CD8-positive, alpha-beta T cell (primary cell): ENCODE measurements at regions of chr1 and their contacts with region 1.

Region 1: DNA sequence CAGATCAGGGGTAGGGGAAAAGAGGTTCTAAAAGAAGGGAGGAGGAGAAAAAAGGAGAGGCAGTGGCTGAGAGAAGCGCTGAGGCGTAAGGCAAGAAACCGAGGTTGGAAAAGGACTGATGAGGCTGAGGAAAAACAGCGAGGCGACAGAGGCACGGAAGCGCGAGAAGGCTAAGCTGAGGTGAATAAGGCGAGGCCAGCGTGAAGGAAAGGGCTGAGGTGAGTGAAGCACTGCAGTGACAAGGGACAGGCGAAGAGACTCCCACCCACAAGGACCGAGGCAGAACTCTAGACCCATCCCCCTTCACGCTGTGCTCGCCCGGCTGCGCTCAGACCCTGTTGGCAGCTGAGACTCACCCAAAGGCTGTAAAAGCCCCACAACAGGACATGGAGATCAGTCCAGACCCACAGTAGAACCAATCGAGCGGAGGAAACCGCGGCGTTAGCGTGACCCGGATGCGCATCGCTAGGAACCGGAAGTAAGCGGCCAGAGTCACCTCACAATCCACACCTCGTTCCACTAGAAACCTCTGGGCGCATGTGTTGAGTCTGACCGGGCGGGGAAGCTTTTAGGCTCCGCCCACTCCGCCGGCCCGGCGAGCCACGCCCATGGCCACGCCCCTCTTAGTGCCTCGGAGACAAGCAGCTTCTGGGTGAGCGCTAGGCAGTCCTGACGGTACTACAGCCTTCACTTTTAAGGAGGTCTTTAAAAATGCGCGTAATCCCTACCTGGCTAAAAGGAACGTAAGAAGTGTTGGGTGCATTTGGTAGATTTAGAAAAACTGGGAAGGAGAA is at the start of gene EYA3:
- DNase-seq: peak; percentile 97 to 100 (median 99)
- ATAC-seq: peak; percentile 95
- H3K4me3 ChIP-seq: peak within 1 kb of the TSS; percentile 72 to 84
- H3K4me3 Mint-ChIP-seq: peak within 1 kb of the TSS; percentile 85
- H3K27ac ChIP-seq: peak within 1 kb of the TSS; percentile 58 to 89
- H3K27ac Mint-ChIP-seq: peak within 1 kb of the TSS; percentile 97
- H3K4me1 ChIP-seq: peaks cover 25% of the 10 kb centered on the region
- H3K4me1 Mint-ChIP-seq: peaks cover 45% of the 10 kb centered on the region
- H3K27me3 ChIP-seq: no peaks in the 10 kb centered on the region
- H3K27me3 Mint-ChIP-seq: peaks cover 3% of the 10 kb centered on the region
- CTCF ChIP-seq: no peak
- total RNA-seq, gene EYA3: 4.9 to 5.2 TPM

Region 2: GRCh38 chr1:27772933-27773825 is 315.2 kb before region 1 on chr1 and contains the start of gene STX12:
- CTCF ChIA-PET with region 1: no interaction called
- POLR2A ChIA-PET with region 1: no interaction called
- intact Hi-C with region 1: loop called in 1 of 2 experiments (anchors 2 kb)
- DNase-seq: peak; percentile 96 to 100 (median 98)
- ATAC-seq: peak; percentile 91
- H3K4me3 ChIP-seq: peak within 1 kb of the TSS; percentile 94 to 98
- H3K4me3 Mint-ChIP-seq: peak within 1 kb of the TSS; percentile 91
- H3K27ac ChIP-seq: peak within 1 kb of the TSS; percentile 76 to 94
- H3K27ac Mint-ChIP-seq: peak within 1 kb of the TSS; percentile 98
- H3K4me1 ChIP-seq: peaks cover 16% of the 10 kb centered on the region
- H3K4me1 Mint-ChIP-seq: peaks cover 37% of the 10 kb centered on the region
- H3K27me3 ChIP-seq: no peaks in the 10 kb centered on the region
- H3K27me3 Mint-ChIP-seq: no peaks in the 10 kb centered on the region
- CTCF ChIP-seq: no peak
- total RNA-seq, gene STX12: 21.0 to 26.0 TPM

Region 3: DNA sequence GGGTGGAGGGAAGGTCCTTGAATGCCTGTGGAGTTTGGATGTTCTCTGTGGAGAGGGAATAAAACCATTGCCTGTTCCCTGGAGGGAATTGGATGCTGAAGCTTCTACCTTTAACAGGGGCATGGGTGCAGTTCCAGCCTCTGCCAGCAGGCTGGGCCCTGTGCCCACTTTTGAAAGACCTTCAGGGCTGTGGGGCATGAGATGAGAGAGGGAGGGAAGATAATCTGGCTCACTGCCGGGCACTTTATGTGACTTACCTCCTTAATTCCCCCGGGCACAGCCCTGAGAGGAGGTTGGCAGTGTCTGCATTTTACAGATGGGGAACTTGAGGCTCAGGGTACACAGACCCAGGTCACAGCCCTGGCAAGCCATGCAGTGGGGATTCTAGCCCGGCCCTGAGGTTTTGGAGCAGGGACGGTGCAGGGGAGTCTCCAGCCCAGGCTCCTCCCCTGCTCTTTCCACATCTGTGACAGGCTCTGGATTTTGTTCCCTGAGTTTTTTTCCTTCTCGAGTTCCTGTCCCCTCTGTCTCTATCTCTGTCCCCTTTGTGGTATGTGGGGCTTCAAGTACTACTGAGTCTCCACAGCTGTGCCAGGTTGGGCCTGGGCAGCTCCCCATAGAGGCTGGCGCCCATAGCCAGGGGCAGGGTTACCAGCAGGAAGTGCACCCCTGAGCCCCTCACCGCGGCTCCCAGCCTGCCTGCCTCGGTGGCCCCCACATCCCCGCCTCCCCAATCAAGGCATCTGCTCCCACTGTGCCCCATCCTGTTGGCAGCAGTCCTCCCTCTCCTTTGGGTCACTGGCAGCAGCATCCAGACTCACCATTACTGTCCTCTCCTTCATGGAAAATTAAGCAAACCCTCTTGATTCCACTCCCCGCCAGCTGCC is 230.1 kb before region 1 on chr1:
- CTCF ChIA-PET with region 1: no interaction called
- POLR2A ChIA-PET with region 1: no interaction called
- intact Hi-C with region 1: loop called in 1 of 2 experiments (anchors 5 kb)
- DNase-seq: peak; percentile 71 to 91 (median 85)
- ATAC-seq: peak; percentile 100
- H3K4me3 ChIP-seq: no peak overlapping the region
- H3K4me3 Mint-ChIP-seq: no peak overlapping the region
- H3K27ac ChIP-seq: no peak overlapping the region
- H3K27ac Mint-ChIP-seq: no peak overlapping the region
- H3K4me1 ChIP-seq: peaks cover 11% of the 10 kb centered on the region
- H3K4me1 Mint-ChIP-seq: peaks cover 17% of the 10 kb centered on the region
- H3K27me3 ChIP-seq: no peaks in the 10 kb centered on the region
- H3K27me3 Mint-ChIP-seq: no peaks in the 10 kb centered on the region
- CTCF ChIP-seq: peak; percentile 100

Region 4: GRCh38 chr1:28160782-28161266 is 72.5 kb after region 1 on chr1:
- CTCF ChIA-PET with region 1: interaction called, 3 read pairs
- POLR2A ChIA-PET with region 1: no interaction called
- intact Hi-C with region 1: loop called in 1 of 2 experiments (anchors 10 kb)
- DNase-seq: no peak
- ATAC-seq: no peak
- H3K4me3 ChIP-seq: no peak overlapping the region
- H3K4me3 Mint-ChIP-seq: no peak overlapping the region
- H3K27ac ChIP-seq: no peak overlapping the region
- H3K27ac Mint-ChIP-seq: no peak overlapping the region
- H3K4me1 ChIP-seq: no peaks in the 10 kb centered on the region
- H3K4me1 Mint-ChIP-seq: no peaks in the 10 kb centered on the region
- H3K27me3 ChIP-seq: peaks cover 0 to 4% of the 10 kb centered on the region in 2 experiments
- H3K27me3 Mint-ChIP-seq: peaks cover 21% of the 10 kb centered on the region
- CTCF ChIP-seq: no peak

Region 5: DNA sequence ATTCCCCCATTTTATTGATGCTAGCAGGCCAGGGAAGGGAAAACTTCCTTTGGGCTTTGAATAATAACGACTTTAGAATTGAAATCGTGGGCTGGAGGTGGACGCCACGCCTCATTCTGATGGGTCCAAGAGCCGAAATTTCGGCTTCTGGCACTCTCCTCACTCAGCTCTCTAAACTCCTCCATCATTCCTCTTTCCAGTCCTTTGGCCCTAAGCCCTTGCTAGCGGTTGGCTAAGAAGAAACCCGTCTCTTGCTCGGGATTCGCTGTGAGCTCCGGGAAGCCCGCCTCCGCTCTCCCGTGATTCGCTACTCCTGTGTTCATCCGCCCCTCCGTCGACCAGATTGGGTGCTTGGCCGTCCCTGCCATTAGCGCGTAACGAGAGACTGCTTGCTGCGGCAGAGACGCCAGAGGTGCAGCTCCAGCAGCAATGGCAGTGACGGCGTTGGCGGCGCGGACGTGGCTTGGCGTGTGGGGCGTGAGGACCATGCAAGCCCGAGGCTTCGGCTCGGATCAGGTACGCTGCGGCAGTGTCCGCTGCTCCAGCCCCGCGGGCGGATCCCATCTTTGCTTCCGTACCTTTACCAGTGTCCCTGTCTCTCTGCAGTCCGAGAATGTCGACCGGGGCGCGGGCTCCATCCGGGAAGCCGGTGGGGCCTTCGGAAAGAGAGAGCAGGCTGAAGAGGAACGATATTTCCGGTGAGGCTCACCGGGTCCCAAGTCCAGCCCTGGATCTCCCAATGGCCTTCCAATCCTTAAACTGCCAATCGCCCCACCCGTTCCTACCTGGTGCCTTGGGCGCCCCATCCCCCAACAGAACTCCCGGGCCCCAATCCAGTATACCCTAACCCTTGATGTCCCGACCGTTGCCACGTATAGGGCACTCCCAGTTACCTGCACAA is 147.6 kb after region 1 on chr1 and contains the start of gene ATP5IF1:
- CTCF ChIA-PET with region 1: interaction called, 3 read pairs
- POLR2A ChIA-PET with region 1: interaction called, 4 read pairs
- intact Hi-C with region 1: loop called (anchors 1 kb)
- DNase-seq: peak; percentile 90 to 98 (median 94)
- ATAC-seq: peak; percentile 95
- H3K4me3 ChIP-seq: peak within 1 kb of the TSS; percentile 80 to 96
- H3K4me3 Mint-ChIP-seq: no peak within 1 kb of the TSS
- H3K27ac ChIP-seq: peak within 1 kb of the TSS; percentile 84 to 96
- H3K27ac Mint-ChIP-seq: no peak within 1 kb of the TSS
- H3K4me1 ChIP-seq: peaks cover 41% of the 10 kb centered on the region
- H3K4me1 Mint-ChIP-seq: peaks cover 21% of the 10 kb centered on the region
- H3K27me3 ChIP-seq: no peaks in the 10 kb centered on the region
- H3K27me3 Mint-ChIP-seq: no peaks in the 10 kb centered on the region
- CTCF ChIP-seq: no peak
- total RNA-seq, gene ATP5IF1: 66.1 to 69.3 TPM

Region 6: GRCh38 chr1:28552758-28553663 is 464.6 kb after region 1 on chr1 and contains the start of gene TRNAU1AP:
- CTCF ChIA-PET with region 1: no interaction called
- POLR2A ChIA-PET with region 1: no interaction called
- intact Hi-C with region 1: loop called in 1 of 2 experiments (anchors 2 kb)
- DNase-seq: peak; percentile 95 to 98 (median 97)
- ATAC-seq: peak; percentile 96
- H3K4me3 ChIP-seq: peak within 1 kb of the TSS; percentile 91 to 98
- H3K4me3 Mint-ChIP-seq: peak within 1 kb of the TSS; percentile 99
- H3K27ac ChIP-seq: peak within 1 kb of the TSS; percentile 77 to 86
- H3K27ac Mint-ChIP-seq: peak within 1 kb of the TSS; percentile 99
- H3K4me1 ChIP-seq: peaks cover 15% of the 10 kb centered on the region
- H3K4me1 Mint-ChIP-seq: peaks cover 24% of the 10 kb centered on the region
- H3K27me3 ChIP-seq: no peaks in the 10 kb centered on the region
- H3K27me3 Mint-ChIP-seq: no peaks in the 10 kb centered on the region
- CTCF ChIP-seq: no peak
- total RNA-seq, gene TRNAU1AP: 20.5 to 25.7 TPM